PC-3 (cell line): ENCODE measurements at regions of chr14 and their contacts with region 1.

Region 1: GRCh38 chr14:69129264-69129880 is 23.5 kb downstream of the DCAF5 start:
- DNase-seq: peak; percentile 84
- ATAC-seq: peak; percentile 77
- H3K4me3 ChIP-seq: no peak overlapping the region
- H3K27ac ChIP-seq: 0 out of 2 replicates have a peak overlapping the region, but pooled peaks have one; percentile 6
- H3K4me1 ChIP-seq: peaks cover 34% of the 10 kb centered on the region
- H3K27me3 ChIP-seq: no peaks in the 10 kb centered on the region
- CTCF ChIP-seq: peak; percentile 98

Region 2: DNA sequence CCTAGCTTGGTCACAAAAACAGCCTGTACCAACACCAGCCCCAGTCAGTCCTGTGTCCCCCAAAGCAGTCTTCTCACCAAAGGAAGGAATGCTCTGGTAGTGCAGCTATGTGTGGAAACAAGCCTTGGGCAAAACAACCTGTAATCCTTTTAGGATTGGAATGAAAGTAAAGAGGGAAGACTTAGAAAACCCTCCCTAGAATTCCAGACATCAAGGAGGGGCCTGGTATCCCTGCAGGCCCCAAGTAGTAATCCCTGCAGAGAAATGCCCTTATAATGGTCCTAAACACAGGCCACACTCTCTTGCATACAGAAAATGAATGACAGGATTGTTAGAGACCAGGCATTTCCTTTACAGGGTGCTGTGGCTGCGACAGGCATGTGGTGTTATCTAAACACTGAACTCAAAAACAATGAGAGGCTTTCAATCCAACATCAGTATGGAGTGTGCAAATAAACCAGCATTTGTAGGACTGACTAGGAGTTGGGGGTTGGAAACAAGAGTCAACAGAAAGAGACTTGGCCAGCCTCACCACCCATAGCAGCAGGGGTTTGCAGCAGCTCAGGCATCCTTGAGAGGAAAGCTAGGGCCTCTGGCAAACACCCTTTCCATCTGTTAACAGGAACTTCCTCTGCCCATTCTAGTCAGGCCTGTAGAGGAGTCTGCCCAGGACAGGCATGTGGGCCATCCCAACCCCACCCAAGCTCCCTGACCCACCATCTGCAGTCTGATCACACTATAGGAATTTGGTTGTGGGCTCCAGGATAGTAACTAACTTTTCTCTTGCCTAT is 35.5 kb before region 1 on chr14:
- CTCF ChIA-PET with region 1: no interaction called
- POLR2A ChIA-PET with region 1: no interaction called
- intact Hi-C with region 1: no loop called
- DNase-seq: peak; percentile 27
- ATAC-seq: peak; percentile 84
- H3K4me3 ChIP-seq: no peak overlapping the region
- H3K27ac ChIP-seq: no peak overlapping the region
- H3K4me1 ChIP-seq: peaks cover 12% of the 10 kb centered on the region
- H3K27me3 ChIP-seq: no peaks in the 10 kb centered on the region
- CTCF ChIP-seq: no peak

Region 3: DNA sequence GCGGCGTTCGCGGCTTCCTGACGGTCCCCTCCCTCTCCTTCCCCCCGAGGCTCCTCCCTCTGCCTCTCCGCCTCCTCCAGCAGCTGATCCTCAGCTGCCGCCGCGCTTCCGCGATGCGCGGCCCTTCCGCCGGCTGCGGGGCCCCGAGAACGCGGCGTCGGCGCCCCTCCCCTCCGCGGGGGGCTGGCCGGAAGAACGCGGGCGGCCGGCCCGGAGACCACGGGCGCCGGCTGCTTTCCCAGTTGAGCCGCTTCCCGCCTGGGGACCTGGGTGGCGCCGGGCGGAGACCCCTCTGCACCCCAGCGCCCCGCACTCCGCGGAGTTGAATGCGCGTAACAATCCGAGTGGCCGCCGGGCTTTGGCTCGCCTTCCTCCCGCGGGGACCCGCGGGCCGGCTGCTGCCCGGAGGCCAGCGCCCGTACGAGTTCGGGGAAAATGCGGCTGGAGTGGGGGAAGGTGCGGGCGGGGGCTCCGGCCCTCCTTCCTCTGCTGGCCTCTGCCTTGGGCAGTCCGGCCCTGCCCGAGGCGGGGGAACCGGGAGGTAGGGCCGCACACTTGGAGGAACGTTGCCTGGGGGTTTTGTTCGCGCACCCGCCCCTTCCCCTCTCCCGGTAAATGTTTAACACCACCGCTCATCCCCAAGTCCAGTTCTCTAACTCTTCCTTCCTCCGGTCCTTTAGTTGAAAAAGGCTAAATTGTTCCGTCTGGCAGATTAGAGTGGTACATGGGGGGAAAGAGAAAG is 23.9 kb after region 1 on chr14:
- CTCF ChIA-PET with region 1: interaction called, 20 read pairs
- POLR2A ChIA-PET with region 1: interaction called, 5 read pairs
- intact Hi-C with region 1: no loop called
- DNase-seq: peak; percentile 91
- ATAC-seq: peak; percentile 82
- H3K4me3 ChIP-seq: peak overlapping the region; percentile 94
- H3K27ac ChIP-seq: no peak overlapping the region
- H3K4me1 ChIP-seq: peaks cover 43% of the 10 kb centered on the region
- H3K27me3 ChIP-seq: no peaks in the 10 kb centered on the region
- CTCF ChIP-seq: no peak

Region 4: GRCh38 chr14:69214393-69214792 is 85.0 kb after region 1 on chr14:
- CTCF ChIA-PET with region 1: interaction called, 5 read pairs
- POLR2A ChIA-PET with region 1: no interaction called
- intact Hi-C with region 1: loop called (anchors 1 kb)
- DNase-seq: peak; percentile 31
- ATAC-seq: peak; percentile 100
- H3K4me3 ChIP-seq: no peak overlapping the region
- H3K27ac ChIP-seq: 0 out of 2 replicates have a peak overlapping the region, but pooled peaks have one; percentile 3
- H3K4me1 ChIP-seq: peaks cover 8% of the 10 kb centered on the region; the same call in 1 of the 2 replicates
- H3K27me3 ChIP-seq: no peaks in the 10 kb centered on the region
- CTCF ChIP-seq: no peak

Region 5: GRCh38 chr14:69288011-69288771 is 158.8 kb after region 1 on chr14:
- CTCF ChIA-PET with region 1: interaction called, 4 read pairs
- POLR2A ChIA-PET with region 1: no interaction called
- intact Hi-C with region 1: loop called (anchors 1 kb)
- DNase-seq: peak; percentile 47
- ATAC-seq: peak; percentile 74
- H3K4me3 ChIP-seq: no peak overlapping the region
- H3K27ac ChIP-seq: no peak overlapping the region
- H3K4me1 ChIP-seq: no peaks in the 10 kb centered on the region
- H3K27me3 ChIP-seq: no peaks in the 10 kb centered on the region
- CTCF ChIP-seq: peak; percentile 48; the same call in 1 of the 2 replicates

Region 6: GRCh38 chr14:69460093-69460701 is 330.8 kb after region 1 on chr14:
- CTCF ChIA-PET with region 1: interaction called, 4 read pairs
- POLR2A ChIA-PET with region 1: interaction called, 4 read pairs
- intact Hi-C with region 1: loop called (anchors 1 kb)
- DNase-seq: peak; percentile 91
- ATAC-seq: peak; percentile 46
- H3K4me3 ChIP-seq: no peak overlapping the region
- H3K27ac ChIP-seq: no peak overlapping the region
- H3K4me1 ChIP-seq: peaks cover 11% of the 10 kb centered on the region
- H3K27me3 ChIP-seq: no peaks in the 10 kb centered on the region
- CTCF ChIP-seq: peak; percentile 94

Region 7: DNA sequence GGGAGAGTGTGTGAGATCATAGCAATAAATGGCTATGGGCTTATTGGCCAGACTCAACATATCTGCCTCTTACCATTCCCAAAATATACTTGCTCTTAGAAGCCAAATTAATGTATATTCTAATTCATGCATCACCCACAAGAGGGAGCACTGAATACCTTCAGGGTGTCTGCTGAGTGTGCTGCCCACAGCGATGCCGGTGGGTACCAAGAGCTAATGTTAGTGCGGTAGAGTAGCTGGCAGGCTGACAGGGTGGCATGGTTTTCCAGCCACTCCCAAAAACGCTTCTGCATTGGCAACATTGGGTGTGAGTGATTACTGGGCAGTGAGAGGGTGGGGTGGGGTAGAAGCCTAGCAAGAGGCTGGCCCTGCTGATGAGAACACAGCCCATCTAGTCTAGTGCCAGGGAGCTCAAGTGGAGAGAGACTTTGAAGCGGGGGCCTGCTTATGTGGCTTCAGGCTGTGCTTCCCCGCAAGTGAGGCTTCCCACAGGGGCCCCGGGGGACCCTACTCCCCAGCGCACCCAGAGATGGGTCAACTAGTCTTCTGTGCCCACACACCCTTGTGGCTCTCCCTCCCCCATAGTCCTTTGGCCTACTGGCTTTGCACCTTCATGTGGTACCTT is 345.9 kb after region 1 on chr14:
- CTCF ChIA-PET with region 1: no interaction called
- POLR2A ChIA-PET with region 1: no interaction called
- intact Hi-C with region 1: no loop called
- DNase-seq: peak; percentile 66
- ATAC-seq: peak; percentile 51
- H3K4me3 ChIP-seq: no peak overlapping the region
- H3K27ac ChIP-seq: no peak overlapping the region
- H3K4me1 ChIP-seq: peaks cover 11% of the 10 kb centered on the region
- H3K27me3 ChIP-seq: no peaks in the 10 kb centered on the region
- CTCF ChIP-seq: peak; percentile 76